GM10248 (cell line): ENCODE measurements at regions of chr10 and their contacts with region 1.

Region 1: DNA sequence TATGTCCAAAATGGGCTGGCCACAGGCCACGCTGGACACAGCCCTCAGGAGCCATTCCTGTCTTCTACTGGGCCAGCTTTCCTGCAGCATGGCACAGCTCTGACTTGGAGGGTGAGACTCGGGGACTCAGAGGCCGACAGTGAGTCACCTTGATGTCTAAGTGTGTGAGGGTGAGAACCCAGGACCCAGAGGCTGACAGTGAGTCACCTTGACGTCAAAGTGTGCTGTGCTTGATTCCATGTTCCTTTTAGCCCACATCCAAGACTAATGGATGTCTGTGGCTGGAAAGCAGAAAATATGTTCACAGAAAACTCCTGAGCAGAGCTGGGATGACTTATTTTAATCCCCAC is 6.0 kb upstream of the FAM170B start:
- DNase-seq: no peak
- CTCF ChIP-seq: no peak

Region 2: GRCh38 chr10:48926764-48927540 is 212.9 kb before region 1 on chr10:
- CTCF ChIA-PET with region 1: no interaction called
- POLR2A ChIA-PET with region 1: no interaction called
- DNase-seq: no peak
- CTCF ChIP-seq: no peak

Region 3: DNA sequence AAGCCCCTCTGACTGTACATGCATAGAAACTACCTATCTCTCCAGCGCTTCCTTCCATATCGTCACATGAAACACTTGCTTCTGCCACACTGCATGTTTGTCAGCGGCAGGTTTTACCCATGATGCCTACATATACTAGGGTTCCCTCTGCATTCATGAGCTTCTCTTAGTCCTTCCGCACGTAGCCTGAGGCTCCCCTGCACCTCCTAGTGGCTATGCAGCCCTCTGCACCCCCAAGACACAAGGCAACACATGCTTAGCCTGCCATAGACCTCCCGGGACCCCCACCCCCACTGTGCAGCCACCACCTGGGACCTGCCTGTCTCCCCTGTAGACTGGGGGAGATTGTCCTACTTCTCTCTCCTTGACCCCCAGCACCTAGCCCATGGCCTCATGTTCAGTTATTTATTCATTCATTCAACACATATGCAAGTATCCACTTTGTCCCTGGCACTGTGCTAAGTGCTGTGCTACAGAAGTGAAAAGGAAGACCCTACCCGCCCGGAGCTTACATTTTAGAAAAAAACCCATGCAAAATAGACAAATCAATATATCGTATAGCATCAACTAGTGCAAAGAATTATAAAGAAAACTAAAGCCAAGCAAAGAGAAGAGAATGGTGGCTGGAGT is 24.9 kb after region 1 on chr10:
- CTCF ChIA-PET with region 1: interaction called, 10 read pairs
- POLR2A ChIA-PET with region 1: no interaction called
- DNase-seq: peak; percentile 58
- CTCF ChIP-seq: peak; percentile 65

Region 4: DNA sequence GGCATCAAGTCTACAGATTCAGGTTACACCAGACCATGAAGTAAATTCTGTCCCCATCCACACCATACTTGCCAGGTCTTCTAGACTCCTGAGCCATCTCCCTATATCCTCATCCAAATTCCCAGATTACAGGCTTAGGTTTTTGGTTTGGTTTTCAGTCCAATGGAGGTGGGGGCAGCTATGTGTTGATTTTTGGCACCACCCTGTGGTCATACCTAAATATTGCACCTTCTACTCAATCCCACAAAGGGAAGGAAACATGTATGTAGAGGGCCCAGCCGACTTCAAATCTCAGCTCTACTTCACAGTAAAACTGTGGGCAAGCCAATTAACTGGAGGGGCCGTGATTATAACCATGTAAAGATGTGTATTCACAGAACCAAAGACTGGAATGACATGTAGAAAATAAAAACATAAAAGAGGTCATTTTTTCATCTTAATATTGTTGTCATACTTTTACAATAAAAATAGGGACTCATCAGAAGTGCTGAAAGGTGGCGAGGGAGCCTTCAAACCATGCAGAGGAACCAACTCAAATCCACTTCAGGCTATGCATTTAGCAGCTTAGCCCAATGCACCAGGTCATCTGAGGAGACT is 379.3 kb after region 1 on chr10:
- CTCF ChIA-PET with region 1: no interaction called
- POLR2A ChIA-PET with region 1: no interaction called
- DNase-seq: peak; percentile 42
- CTCF ChIP-seq: peak; percentile 49